HCT116 (cell line): ENCODE measurements at regions of chr12 and their contacts with region 1.

Region 1: DNA sequence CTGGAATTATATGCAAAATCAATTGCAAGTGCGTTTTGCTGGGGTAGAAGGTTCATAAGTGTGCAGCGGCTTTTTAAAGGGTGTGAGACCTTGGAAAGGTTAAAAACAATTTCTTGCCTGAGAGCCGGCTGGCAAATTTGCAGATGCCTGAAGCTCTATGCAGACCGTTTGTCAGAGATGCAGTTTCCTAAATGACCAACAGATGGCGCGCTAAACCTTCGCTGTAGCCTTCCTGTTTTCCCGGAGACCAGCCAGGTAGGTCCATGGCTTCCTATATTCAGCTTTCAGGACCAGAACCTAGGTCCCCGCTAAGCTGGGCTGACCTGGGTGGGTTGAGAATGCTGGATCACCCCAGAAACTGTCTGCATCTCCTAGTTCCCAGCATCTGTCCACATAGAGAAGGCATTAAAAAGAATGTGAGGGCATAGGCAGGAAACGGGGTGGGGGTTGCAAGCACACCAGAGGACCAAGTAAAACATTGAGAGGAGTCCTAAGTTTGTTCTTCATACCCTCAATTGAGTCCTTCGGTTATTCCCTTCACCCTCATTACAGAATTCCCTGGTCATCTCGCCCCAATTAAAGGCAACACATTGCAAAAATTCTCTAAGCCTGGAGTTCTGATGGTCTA is 5.7 kb upstream of the NOS1 start:
- DNase-seq: peak; percentile 69
- ATAC-seq: peak; percentile 90
- H3K4me3 ChIP-seq: no peak overlapping the region
- H3K27ac ChIP-seq: no peak overlapping the region
- H3K4me1 ChIP-seq: 0 out of 4 replicates have a peak, but pooled peaks cover 0 to 2% of the 10 kb centered on the region in 2 experiments
- H3K27me3 ChIP-seq: peaks cover 62% of the 10 kb centered on the region
- CTCF ChIP-seq: peak; percentile 92 to 96 (median 93)
- POLR2A ChIP-seq: no peak
- RAD21 ChIP-seq: peak; percentile 97

Region 2: GRCh38 chr12:117212563-117213190 is 154.4 kb before region 1 on chr12:
- CTCF ChIA-PET with region 1: interaction called, 3 read pairs
- POLR2A ChIA-PET with region 1: no interaction called
- RAD21 ChIA-PET with region 1: no interaction called
- intact Hi-C with region 1: loop called (anchors 5 kb)
- DNase-seq: peak; percentile 68
- ATAC-seq: peak; percentile 93
- H3K4me3 ChIP-seq: no peak overlapping the region
- H3K27ac ChIP-seq: no peak overlapping the region
- H3K4me1 ChIP-seq: no peaks in the 10 kb centered on the region
- H3K27me3 ChIP-seq: peaks cover 9% of the 10 kb centered on the region; the same call in 1 of the 2 replicates
- CTCF ChIP-seq: peak; percentile 88 to 98 (median 91)
- POLR2A ChIP-seq: no peak
- RAD21 ChIP-seq: peak; percentile 92

Region 3: DNA sequence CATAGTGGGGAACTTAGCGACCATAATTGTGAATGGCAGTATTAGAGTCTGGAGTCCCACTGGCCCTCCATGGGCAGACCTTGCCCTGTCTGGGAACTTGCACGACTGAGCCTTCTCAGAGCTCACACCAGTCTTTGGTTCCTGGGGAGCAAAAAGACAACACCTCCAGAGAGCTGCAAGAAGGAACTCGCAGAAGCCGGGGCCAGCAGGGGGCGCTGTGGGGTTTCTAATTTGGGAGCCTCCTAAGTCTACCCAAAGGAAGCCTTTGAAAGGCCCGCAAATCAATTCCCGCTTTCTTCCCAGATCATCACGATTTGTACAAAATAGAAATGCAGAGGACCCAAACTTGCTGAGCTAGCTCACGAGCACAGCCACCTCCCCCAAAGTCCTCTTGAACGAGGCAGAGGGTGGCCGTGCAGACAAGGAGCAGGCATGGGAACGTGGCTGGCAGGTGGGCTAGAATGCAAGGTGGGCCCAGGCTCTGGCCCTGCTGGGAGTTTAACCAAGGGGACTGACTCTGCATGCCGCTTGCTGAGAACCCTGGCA is 130.6 kb before region 1 on chr12:
- CTCF ChIA-PET with region 1: interaction called, 7 read pairs
- POLR2A ChIA-PET with region 1: no interaction called
- RAD21 ChIA-PET with region 1: no interaction called
- intact Hi-C with region 1: loop called (anchors 2 kb)
- DNase-seq: peak; percentile 58
- ATAC-seq: peak; percentile 92
- H3K4me3 ChIP-seq: no peak overlapping the region
- H3K27ac ChIP-seq: no peak overlapping the region
- H3K4me1 ChIP-seq: no peaks in the 10 kb centered on the region
- H3K27me3 ChIP-seq: 0 out of 2 replicates have a peak, but pooled peaks cover 6% of the 10 kb centered on the region
- CTCF ChIP-seq: peak; percentile 70 to 92 (median 85)
- POLR2A ChIP-seq: no peak
- RAD21 ChIP-seq: peak; percentile 77

Region 4: GRCh38 chr12:117587631-117588287 is 220.6 kb after region 1 on chr12:
- CTCF ChIA-PET with region 1: interaction called, 83 read pairs
- POLR2A ChIA-PET with region 1: no interaction called
- RAD21 ChIA-PET with region 1: interaction called, 4 to 10 read pairs
- intact Hi-C with region 1: loop called (anchors 1 kb)
- DNase-seq: peak; percentile 15
- ATAC-seq: peak; percentile 97
- H3K4me3 ChIP-seq: no peak overlapping the region
- H3K27ac ChIP-seq: no peak overlapping the region
- H3K4me1 ChIP-seq: no peaks in the 10 kb centered on the region
- H3K27me3 ChIP-seq: no peaks in the 10 kb centered on the region
- CTCF ChIP-seq: peak; percentile 76 to 91 (median 86); a peak in 5 of 6 replicates
- POLR2A ChIP-seq: no peak
- RAD21 ChIP-seq: peak; percentile 84

Region 5: DNA sequence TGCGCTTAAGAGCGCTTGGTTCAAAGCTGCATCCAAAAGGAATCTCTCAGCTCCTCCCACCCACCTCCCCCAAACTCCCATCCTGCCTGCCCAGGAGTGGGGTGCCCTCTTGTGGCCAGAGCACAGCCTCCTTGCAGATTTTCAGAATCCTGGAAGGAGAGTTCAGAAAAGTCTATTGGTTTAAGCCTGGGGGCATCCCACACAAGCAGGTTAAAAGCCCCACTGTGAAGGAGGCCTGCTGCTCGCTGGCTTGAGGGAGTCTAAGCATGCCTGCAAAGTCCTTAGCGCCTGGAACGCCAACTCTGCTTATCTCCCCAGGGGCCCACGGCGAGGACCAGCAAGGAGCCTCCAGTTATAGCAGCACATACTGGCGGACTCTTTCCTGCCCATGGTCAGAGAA is 304.6 kb after region 1 on chr12:
- CTCF ChIA-PET with region 1: interaction called, 27 read pairs
- POLR2A ChIA-PET with region 1: no interaction called
- RAD21 ChIA-PET with region 1: interaction called in 1 of 2 experiments, 3 read pairs
- intact Hi-C with region 1: loop called (anchors 1 kb)
- DNase-seq: peak; percentile 29
- ATAC-seq: peak; percentile 90
- H3K4me3 ChIP-seq: no peak overlapping the region
- H3K27ac ChIP-seq: no peak overlapping the region
- H3K4me1 ChIP-seq: peaks cover 0 to 5% of the 10 kb centered on the region in 2 experiments; a peak in 1 of 4 replicates
- H3K27me3 ChIP-seq: 0 out of 2 replicates have a peak, but pooled peaks cover 5% of the 10 kb centered on the region
- CTCF ChIP-seq: peak; percentile 74 to 90 (median 88); a peak in 5 of 6 replicates
- POLR2A ChIP-seq: no peak
- RAD21 ChIP-seq: peak; percentile 84

Region 6: GRCh38 chr12:117850048-117850447 is 482.9 kb after region 1 on chr12:
- CTCF ChIA-PET with region 1: interaction called, 31 read pairs
- POLR2A ChIA-PET with region 1: no interaction called
- RAD21 ChIA-PET with region 1: interaction called in 1 of 2 experiments, 4 read pairs
- intact Hi-C with region 1: loop called (anchors 5 kb)
- DNase-seq: peak; percentile 44
- ATAC-seq: peak; percentile 76
- H3K4me3 ChIP-seq: no peak overlapping the region
- H3K27ac ChIP-seq: no peak overlapping the region
- H3K4me1 ChIP-seq: peaks cover 0 to 20% of the 10 kb centered on the region in 2 experiments; a peak in 3 of 4 replicates
- H3K27me3 ChIP-seq: no peaks in the 10 kb centered on the region
- CTCF ChIP-seq: peak; percentile 66 to 92 (median 85); a peak in 5 of 6 replicates
- POLR2A ChIP-seq: no peak
- RAD21 ChIP-seq: peak; percentile 65

Region 7: GRCh38 chr12:117857632-117858612 is 490.8 kb after region 1 on chr12:
- CTCF ChIA-PET with region 1: interaction called, 12 read pairs
- POLR2A ChIA-PET with region 1: no interaction called
- RAD21 ChIA-PET with region 1: no interaction called
- intact Hi-C with region 1: loop called (anchors 5 kb)
- DNase-seq: no peak
- ATAC-seq: peak; percentile 72
- H3K4me3 ChIP-seq: no peak overlapping the region
- H3K27ac ChIP-seq: no peak overlapping the region
- H3K4me1 ChIP-seq: peaks cover 9 to 34% of the 10 kb centered on the region in 2 experiments
- H3K27me3 ChIP-seq: no peaks in the 10 kb centered on the region
- CTCF ChIP-seq: peak; percentile 48 to 78 (median 74); a peak in 5 of 6 replicates
- POLR2A ChIP-seq: no peak
- RAD21 ChIP-seq: peak; percentile 21